HEK293 (cell line): ENCODE measurements at regions of chr21 and their contacts with region 1.

Region 1: DNA sequence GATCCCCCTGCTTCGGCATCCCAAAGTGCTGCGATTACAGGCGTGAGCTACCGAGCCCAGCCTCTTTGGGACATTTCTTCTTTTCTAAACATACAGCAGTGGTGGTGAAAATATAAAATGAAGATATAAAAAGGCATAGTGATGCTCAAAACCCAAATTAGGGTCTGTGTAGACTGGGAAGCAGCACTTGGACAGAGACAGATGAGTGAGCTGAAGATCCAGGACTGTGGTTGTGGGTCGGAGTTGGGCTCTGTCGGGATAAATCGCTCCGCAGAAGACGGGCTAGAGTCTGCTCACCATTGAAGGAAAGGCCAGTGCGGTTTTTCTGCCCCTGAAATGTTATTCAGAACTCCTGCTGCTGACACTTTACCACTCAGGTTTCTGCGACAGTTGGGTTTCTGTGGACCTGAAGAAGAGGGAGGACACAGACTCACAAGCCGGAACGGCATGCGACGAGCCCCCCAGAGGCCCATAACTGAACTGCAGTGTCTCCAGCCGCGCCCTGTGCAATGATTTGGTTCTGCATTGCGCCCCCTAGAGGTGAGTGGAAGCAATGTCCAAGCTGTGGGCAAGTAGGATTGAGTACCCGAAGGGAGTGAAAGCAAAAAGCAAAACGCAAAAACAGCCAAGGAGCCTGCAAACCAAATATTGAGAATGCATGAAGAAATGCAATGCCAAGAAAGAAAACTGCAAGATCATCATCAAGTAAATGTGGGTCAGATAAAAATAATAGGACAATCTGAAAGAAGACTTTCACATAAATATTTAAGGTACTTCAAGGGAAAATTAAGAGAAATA is 66.6 kb downstream of the GABPA start:
- H3K4me3 ChIP-seq: no peak overlapping the region
- H3K27ac ChIP-seq: no peak overlapping the region
- H3K4me1 ChIP-seq: no peaks in the 10 kb centered on the region
- CTCF ChIP-seq: peak; percentile 94

Region 2: DNA sequence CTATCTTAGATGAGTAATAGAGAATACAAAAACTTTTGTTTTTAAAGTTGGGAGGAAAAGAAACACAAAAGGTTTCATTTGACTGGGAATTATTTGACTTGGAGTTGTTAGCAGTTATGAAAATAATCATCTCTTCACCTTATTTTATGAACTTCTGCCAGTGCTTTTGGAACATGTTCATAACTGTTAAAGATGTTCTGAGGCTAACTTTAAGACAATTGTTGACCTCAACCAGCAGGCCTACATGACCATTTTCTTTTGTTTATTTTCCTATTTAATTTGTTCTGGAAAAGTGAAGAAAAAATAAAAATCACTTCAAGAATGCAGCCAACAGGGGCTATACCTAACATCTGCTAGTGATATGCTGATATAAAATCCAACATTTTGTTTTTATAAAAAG is 125.0 kb before region 1 on chr21:
- CTCF ChIA-PET with region 1: no interaction called
- POLR2A ChIA-PET with region 1: no interaction called
- H3K4me3 ChIP-seq: no peak overlapping the region
- H3K27ac ChIP-seq: no peak overlapping the region
- H3K4me1 ChIP-seq: no peaks in the 10 kb centered on the region
- CTCF ChIP-seq: no peak

Region 3: DNA sequence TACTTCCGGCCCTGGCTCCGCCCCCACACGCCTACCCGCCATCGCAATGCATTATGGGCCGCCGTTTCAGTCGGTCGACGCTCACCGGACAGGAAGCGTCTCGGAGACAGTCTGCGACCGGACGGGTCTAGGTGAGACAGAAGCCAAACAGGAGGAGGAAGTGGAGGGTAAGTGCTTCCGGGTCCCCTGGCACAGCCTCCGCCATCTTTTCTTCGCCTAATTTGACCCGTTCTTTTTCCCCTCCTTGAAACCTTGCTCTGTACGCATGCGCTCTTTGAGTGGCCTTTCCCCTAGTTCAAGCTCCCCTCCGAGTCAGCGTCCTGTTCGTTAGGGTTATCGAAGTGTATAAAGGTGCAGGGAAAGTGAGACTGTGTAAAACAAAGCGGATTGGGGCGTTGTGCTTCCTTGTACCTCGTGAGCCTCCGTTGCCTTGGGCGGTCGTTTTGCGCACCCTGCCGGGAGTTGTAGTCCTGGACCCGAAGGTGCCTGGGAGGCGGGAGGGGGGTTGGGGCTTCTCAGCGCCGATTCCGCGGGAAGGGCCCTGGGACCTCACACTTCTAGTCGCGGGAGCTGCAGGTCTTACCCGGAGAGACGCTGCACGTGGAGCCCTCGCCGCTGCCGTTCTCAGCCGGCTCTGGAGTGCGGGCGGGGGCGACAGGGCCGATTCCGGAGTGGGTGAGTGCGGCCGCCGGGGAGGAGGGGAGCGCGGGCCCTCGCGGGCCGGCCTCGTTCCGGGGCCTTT is 66.3 kb before region 1 on chr21 and contains the starts of genes ATP5PF and GABPA:
- CTCF ChIA-PET with region 1: interaction called, 10 read pairs
- POLR2A ChIA-PET with region 1: interaction called, 5 read pairs
- H3K4me3 ChIP-seq: peak within 1 kb of the TSS; percentile 89
- H3K27ac ChIP-seq: peak within 1 kb of the TSS; percentile 99
- H3K4me1 ChIP-seq: peaks cover 12% of the 10 kb centered on the region
- CTCF ChIP-seq: peak; percentile 65

Region 4: GRCh38 chr21:25790122-25790877 is 11.1 kb before region 1 on chr21:
- CTCF ChIA-PET with region 1: interaction called, 28 read pairs
- POLR2A ChIA-PET with region 1: interaction called, 4 read pairs
- H3K4me3 ChIP-seq: peak overlapping the region; percentile 19; the same call in 1 of the 2 replicates
- H3K27ac ChIP-seq: 0 out of 2 replicates have a peak overlapping the region, but pooled peaks have one; percentile 42
- H3K4me1 ChIP-seq: peaks cover 5% of the 10 kb centered on the region; the same call in 1 of the 2 replicates
- CTCF ChIP-seq: peak; percentile 66

Region 5: DNA sequence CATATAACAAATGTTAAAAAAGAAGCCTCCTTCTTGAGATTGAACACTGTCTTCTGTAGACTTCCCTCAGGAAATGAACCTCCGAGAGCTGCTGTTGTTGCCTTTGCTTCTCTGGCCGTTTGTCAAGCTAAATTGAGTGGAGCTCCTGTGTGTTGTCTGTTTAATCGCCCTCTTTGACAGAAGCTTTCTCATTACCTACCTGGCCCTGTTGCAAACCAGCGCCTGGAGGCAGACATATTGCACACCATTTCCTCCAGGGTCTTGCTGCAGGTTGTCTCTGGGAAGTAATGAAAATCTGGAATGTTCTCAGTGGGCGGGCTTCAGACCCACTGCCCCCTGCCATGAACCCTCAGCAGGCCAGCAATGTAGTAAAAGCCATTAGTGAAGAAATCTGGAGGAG is 16.7 kb after region 1 on chr21:
- CTCF ChIA-PET with region 1: interaction called, 31 read pairs
- POLR2A ChIA-PET with region 1: no interaction called
- H3K4me3 ChIP-seq: no peak overlapping the region
- H3K27ac ChIP-seq: no peak overlapping the region
- H3K4me1 ChIP-seq: no peaks in the 10 kb centered on the region
- CTCF ChIP-seq: no peak

Region 6: DNA sequence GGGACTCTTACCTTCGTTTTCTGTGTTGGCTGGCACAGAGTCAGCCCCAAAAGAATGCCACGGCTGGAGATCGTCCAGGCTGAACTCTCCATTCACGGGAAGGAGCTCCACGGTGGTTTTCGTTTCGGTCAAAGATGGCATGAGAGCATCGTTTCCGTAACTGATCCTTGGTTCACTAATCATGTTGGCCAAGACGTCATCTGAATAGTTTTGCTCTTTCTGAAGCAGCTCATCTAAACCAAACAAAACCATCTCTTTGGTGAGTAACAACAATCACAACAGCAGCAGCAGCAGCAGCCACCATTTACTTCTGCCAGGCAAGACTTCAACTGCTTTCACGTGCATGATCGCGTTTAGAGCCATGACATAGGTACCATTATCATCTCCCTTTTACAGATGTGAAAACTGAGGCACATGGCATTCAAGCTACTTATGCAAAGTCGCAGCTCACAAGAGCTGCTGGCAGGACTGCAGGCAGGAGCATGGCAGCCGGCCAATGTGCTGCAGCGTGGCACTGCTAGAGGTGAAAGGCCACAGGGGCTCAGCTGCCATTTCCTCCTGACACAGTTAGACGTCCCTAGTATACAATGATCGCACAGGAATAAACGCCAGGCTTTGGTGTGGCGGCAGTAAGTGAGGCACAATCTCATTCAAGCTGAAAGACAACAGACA is 110.5 kb after region 1 on chr21:
- CTCF ChIA-PET with region 1: no interaction called
- POLR2A ChIA-PET with region 1: no interaction called
- H3K4me3 ChIP-seq: no peak overlapping the region
- H3K27ac ChIP-seq: no peak overlapping the region
- H3K4me1 ChIP-seq: no peaks in the 10 kb centered on the region
- CTCF ChIP-seq: no peak

Region 7: DNA sequence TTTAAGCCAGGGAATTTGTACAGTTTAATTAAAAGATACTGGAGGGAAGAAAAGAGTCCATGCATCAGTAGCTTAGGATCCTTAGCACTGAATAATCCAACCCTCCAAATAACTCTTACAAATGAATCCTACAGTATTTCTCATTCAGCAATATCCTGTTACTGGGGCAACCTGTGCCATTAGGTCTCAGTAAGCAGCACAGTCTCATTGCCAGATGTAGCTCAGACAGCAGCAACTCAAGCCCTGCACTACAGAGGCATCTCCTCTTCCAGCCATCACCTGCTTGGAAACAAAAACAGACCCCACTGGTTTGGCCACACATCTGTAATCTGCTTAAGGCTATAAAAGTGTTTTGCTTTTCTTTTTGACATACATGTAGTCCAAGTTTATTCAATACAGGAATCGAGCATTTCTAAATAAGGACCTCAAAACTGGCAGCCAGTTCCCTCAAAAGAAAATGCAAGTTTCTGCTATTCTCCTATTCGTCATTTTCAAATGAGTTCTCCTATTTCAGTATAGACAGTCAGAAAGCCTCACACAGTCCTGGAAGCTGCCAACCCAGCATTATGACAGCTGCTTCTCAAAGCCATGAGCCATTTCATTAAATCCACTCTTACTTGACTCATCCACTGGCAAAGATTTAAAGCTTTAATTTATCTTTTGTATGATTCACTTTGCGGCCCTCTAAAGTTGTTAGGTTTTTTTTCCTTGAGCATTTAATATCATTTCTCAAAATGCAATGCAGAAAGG is 240.2 kb after region 1 on chr21:
- CTCF ChIA-PET with region 1: no interaction called
- POLR2A ChIA-PET with region 1: no interaction called
- H3K4me3 ChIP-seq: no peak overlapping the region
- H3K27ac ChIP-seq: no peak overlapping the region
- H3K4me1 ChIP-seq: peaks cover 8% of the 10 kb centered on the region; the same call in 1 of the 2 replicates
- CTCF ChIP-seq: no peak